IMR-90 (cell line): ENCODE measurements at regions of chr2 and their contacts with region 1.

Region 1: GRCh38 chr2:49248506-49248905 is 94.2 kb upstream of the FSHR start:
- DNase-seq: peak; percentile 96
- ATAC-seq: peak; percentile 94
- H3K4me3 ChIP-seq: no peak overlapping the region
- H3K27ac ChIP-seq: peak overlapping the region; percentile 98; the same call in 1 of the 2 replicates
- H3K4me1 ChIP-seq: no peaks in the 10 kb centered on the region
- H3K27me3 ChIP-seq: no peaks in the 10 kb centered on the region
- CTCF ChIP-seq: no peak
- POLR2A ChIP-seq: no peak
- RAD21 ChIP-seq: no peak

Region 2: GRCh38 chr2:47724221-47724981 is 1524.1 kb before region 1 on chr2:
- CTCF ChIA-PET with region 1: no interaction called
- POLR2A ChIA-PET with region 1: no interaction called
- dilution Hi-C with region 1: no loop called
- in situ Hi-C with region 1: no loop called
- intact Hi-C with region 1: no loop called
- DNase-seq: peak; percentile 13
- ATAC-seq: no peak
- H3K4me3 ChIP-seq: no peak overlapping the region
- H3K27ac ChIP-seq: no peak overlapping the region
- H3K4me1 ChIP-seq: no peaks in the 10 kb centered on the region
- H3K27me3 ChIP-seq: no peaks in the 10 kb centered on the region; the same call in 1 of the 2 replicates
- CTCF ChIP-seq: no peak
- POLR2A ChIP-seq: no peak
- RAD21 ChIP-seq: no peak

Region 3: GRCh38 chr2:48727565-48727964 is 520.9 kb before region 1 on chr2:
- CTCF ChIA-PET with region 1: no interaction called
- POLR2A ChIA-PET with region 1: no interaction called
- dilution Hi-C with region 1: no loop called
- in situ Hi-C with region 1: no loop called
- intact Hi-C with region 1: loop called (anchors 10 kb)
- DNase-seq: no peak
- ATAC-seq: no peak
- H3K4me3 ChIP-seq: no peak overlapping the region
- H3K27ac ChIP-seq: no peak overlapping the region
- H3K4me1 ChIP-seq: peaks cover 11% of the 10 kb centered on the region
- H3K27me3 ChIP-seq: no peaks in the 10 kb centered on the region
- CTCF ChIP-seq: no peak
- POLR2A ChIP-seq: no peak
- RAD21 ChIP-seq: no peak

Region 4: GRCh38 chr2:48954935-48955334 is 293.6 kb before region 1 on chr2:
- CTCF ChIA-PET with region 1: no interaction called
- POLR2A ChIA-PET with region 1: no interaction called
- dilution Hi-C with region 1: no loop called
- in situ Hi-C with region 1: no loop called
- intact Hi-C with region 1: loop called (anchors 5 kb)
- DNase-seq: peak; percentile 50
- ATAC-seq: peak; percentile 97
- H3K4me3 ChIP-seq: no peak overlapping the region
- H3K27ac ChIP-seq: peak overlapping the region; percentile 59; the same call in 1 of the 2 replicates
- H3K4me1 ChIP-seq: no peaks in the 10 kb centered on the region
- H3K27me3 ChIP-seq: no peaks in the 10 kb centered on the region
- CTCF ChIP-seq: no peak
- POLR2A ChIP-seq: no peak
- RAD21 ChIP-seq: no peak